CD4-positive, alpha-beta memory T cell (primary cell): ENCODE measurements at regions of chr2 and their contacts with region 1.

Region 1: DNA sequence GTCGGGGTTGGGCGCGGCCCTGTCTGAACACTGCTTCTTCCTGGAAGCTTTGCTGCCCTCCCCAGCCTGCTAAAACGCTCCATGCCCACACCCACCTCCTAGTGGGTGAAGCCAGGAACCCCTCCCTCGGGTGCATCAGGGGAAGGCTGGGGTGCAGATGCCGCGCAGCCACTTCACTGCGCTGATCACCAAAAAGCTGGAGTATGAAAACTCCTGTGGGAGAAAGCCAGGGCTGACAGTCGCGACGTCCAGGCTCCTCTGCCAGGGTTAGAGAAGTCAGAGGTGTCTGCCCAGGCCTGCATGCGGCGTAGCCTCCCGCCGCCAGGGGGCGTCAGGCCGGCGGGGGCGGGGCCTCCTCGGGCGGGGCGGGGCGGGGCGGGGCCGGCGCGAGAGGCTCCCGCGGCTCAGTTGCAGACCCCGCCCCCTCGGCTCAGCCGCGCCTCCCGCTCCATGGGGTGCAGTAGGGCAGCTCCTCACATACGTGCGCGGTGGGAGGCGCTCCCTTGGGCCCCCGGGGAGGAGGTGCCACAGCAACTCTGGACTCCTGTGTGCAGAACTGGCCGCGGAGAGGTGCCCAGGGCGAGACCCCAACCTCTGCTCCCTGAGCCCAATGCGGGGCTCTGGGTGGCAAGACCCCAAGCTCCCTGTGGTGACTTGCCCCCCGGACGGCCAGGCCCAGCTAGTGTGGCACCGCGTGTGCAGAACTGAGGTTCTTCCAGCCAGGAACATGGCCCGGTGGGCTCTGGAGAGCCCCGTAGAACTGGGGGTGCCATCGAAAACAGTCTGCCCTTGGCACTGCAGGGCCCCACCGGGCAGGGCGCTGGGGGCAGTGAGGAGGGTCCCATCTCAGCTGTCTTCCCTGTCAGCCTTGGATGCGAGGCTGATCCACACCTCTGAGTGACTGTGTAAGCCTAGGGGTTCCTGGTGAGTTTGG is 1.8 kb upstream of the RNPEPL1 start:
- DNase-seq: peak; percentile 91 to 96 (median 92)
- H3K4me3 ChIP-seq: peak overlapping the region; percentile 79 to 87
- H3K4me3 Mint-ChIP-seq: peak overlapping the region; percentile 90 to 98 (median 94)
- H3K27ac ChIP-seq: peak overlapping the region; percentile 89
- H3K27ac Mint-ChIP-seq: peak overlapping the region; percentile 98 to 99 (median 99)
- H3K4me1 ChIP-seq: peaks cover 86% of the 10 kb centered on the region
- H3K4me1 Mint-ChIP-seq: peaks cover 46 to 89% (median 69%) of the 10 kb centered on the region in 4 donors
- H3K27me3 ChIP-seq: no peaks in the 10 kb centered on the region
- H3K27me3 Mint-ChIP-seq: no peaks in the 10 kb centered on the region

Region 2: DNA sequence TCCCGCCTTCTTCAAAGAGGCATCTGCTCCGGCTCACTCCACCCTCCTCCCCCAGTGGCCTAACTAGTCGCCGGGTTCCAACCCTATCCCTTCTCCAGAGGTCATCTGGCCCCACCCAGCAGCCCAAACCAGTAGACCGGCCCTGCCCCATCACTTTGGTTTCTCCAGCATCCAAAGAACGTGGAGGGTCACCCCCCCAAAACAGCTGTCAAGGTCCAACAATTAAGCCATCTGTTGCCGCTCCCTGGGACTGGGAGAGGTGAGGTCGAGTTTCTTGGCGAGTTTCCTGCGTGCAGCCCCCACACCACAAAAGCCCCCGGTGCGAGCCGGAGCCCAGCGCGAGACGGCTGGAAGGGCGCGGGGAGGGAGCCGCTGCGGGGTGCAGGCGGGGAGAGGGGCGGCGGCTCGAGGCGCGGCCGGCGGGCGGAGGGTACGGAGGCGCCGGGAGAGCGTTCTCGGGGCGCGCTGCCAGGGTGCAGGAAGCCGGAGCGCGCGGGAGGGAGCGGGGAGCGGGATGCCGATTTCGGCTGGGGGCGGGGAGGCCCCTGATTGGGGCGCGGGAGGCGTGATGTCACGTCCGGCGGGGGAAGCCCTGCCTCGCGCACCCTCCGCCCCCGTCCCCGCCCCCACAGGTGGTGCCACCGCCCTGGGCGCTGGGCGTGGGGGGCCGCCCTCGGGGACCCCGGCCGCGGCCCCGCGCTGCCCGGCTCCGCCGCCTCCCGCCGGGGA is 131.6 kb before region 1 on chr2:
- CTCF ChIA-PET with region 1: no interaction called
- POLR2A ChIA-PET with region 1: interaction called, 5 read pairs
- intact Hi-C with region 1: loop called (anchors 5 kb)
- DNase-seq: peak; percentile 83 to 86 (median 85)
- H3K4me3 ChIP-seq: peak overlapping the region; percentile 47 to 62
- H3K4me3 Mint-ChIP-seq: peak overlapping the region; percentile 84 to 90 (median 86)
- H3K27ac ChIP-seq: no peak overlapping the region
- H3K27ac Mint-ChIP-seq: peak overlapping the region in 5 of 7 donors; percentile 69 to 95 (median 81)
- H3K4me1 ChIP-seq: peaks cover 16% of the 10 kb centered on the region
- H3K4me1 Mint-ChIP-seq: peaks cover 2 to 18% (median 9%) of the 10 kb centered on the region in 4 donors
- H3K27me3 ChIP-seq: peaks cover 8% of the 10 kb centered on the region
- H3K27me3 Mint-ChIP-seq: peaks cover 6 to 11% of the 10 kb centered on the region in 2 donors

Region 3: GRCh38 chr2:240579771-240580614 is 13.5 kb after region 1 on chr2:
- CTCF ChIA-PET with region 1: interaction called, 61 read pairs
- POLR2A ChIA-PET with region 1: interaction called, 461 read pairs
- intact Hi-C with region 1: loop called (anchors 1 kb)
- DNase-seq: peak; percentile 83 to 89 (median 85)
- H3K4me3 ChIP-seq: peak overlapping the region in 1 of 2 donors; percentile 8
- H3K4me3 Mint-ChIP-seq: peak overlapping the region; percentile 5 to 70 (median 47)
- H3K27ac ChIP-seq: peak overlapping the region; percentile 30
- H3K27ac Mint-ChIP-seq: peak overlapping the region; percentile 74 to 93 (median 88)
- H3K4me1 ChIP-seq: peaks cover 34% of the 10 kb centered on the region
- H3K4me1 Mint-ChIP-seq: peaks cover 19 to 50% (median 36%) of the 10 kb centered on the region in 4 donors
- H3K27me3 ChIP-seq: no peaks in the 10 kb centered on the region
- H3K27me3 Mint-ChIP-seq: no peaks in the 10 kb centered on the region

Region 4: DNA sequence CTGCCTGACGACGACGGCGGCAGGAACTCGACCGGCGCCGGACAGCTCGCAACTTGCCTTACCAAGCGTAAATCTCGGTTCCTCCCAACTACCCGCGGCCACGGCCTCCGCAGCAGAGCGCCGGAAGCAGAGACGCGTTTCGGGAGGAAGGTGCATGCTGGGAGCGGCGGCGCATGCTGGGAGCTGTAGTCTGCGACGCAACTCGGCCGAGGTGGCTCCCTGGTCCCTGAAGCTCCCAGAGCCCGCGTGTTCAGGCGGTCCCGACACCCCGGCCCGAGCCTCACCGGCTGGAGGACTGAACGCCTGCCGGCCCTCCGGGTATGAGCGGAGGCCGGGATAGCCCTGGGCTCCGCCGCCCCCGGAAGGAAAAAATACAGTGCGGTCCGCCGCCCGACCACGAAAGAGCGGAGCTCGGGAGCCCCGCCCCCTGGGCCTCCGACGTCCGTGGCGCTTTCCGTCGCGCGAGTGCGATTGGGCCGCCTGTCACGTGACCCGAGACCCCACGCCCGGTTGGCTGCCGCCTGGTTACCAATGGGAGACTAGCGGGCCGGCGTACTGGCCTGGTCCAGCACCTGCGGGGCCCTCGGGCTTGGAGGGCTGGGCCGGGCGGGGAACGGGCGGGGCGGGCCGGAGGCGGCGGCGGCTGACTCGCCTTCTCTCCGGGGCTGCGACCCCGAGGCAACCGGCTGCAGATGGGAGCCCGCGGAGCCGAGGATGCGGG is 19.9 kb after region 1 on chr2 and contains the start of gene CAPN10:
- CTCF ChIA-PET with region 1: interaction called, 61 read pairs
- POLR2A ChIA-PET with region 1: interaction called, 461 read pairs
- intact Hi-C with region 1: loop called (anchors 1 kb)
- DNase-seq: peak; percentile 96 to 98 (median 97)
- H3K4me3 ChIP-seq: peak within 1 kb of the TSS; percentile 63 to 99
- H3K4me3 Mint-ChIP-seq: peak within 1 kb of the TSS; percentile 93 to 98 (median 96)
- H3K27ac ChIP-seq: peak within 1 kb of the TSS; percentile 80
- H3K27ac Mint-ChIP-seq: peak within 1 kb of the TSS; percentile 95 to 98 (median 96)
- H3K4me1 ChIP-seq: peaks cover 38% of the 10 kb centered on the region
- H3K4me1 Mint-ChIP-seq: peaks cover 25 to 63% (median 44%) of the 10 kb centered on the region in 4 donors
- H3K27me3 ChIP-seq: no peaks in the 10 kb centered on the region
- H3K27me3 Mint-ChIP-seq: no peaks in the 10 kb centered on the region
- total RNA-seq, gene CAPN10: 80.6 to 83.0 TPM

Region 5: DNA sequence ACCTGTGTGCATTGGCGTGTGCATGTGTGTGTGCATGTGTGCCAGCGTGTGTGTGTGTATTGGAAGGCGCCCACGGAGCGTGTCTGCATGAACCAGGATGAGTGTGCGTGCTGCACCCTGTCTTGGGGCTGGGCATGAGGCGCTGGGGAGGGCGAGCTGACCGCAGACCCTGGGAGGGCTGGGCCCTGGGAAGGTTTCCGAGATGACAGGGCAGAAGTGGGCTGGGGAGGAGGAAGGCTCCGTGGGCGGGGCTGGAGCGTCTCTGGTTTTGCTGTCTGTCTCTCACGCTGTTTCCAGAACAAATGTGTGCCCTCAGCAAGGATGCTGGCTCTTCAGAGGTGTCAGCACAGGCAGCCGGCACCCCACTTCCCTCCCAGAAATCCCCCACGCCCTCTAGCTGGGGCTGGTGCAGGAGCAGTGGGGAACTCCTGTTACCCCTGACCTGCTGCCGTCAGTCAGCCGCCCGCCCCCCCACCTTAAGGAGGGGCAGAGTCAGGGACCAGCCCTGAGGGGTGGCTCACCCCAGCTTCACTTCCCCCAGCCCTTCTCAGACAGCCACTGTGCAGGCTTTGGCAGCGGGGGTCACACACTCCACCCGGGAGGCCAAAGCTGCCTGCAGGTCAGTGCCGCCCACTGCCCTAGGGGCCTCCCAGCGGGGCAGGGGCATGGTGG is 58.6 kb after region 1 on chr2 and contains the start of gene GPR35:
- CTCF ChIA-PET with region 1: interaction called, 4 read pairs
- POLR2A ChIA-PET with region 1: interaction called, 34 read pairs
- intact Hi-C with region 1: no loop called
- DNase-seq: peak; percentile 74 to 96 (median 80)
- H3K4me3 ChIP-seq: no peak within 1 kb of the TSS
- H3K4me3 Mint-ChIP-seq: peak within 1 kb of the TSS; percentile 61 to 79 (median 68)
- H3K27ac ChIP-seq: peak within 1 kb of the TSS; percentile 81
- H3K27ac Mint-ChIP-seq: peak within 1 kb of the TSS; percentile 90 to 96 (median 95)
- H3K4me1 ChIP-seq: peaks cover 88% of the 10 kb centered on the region
- H3K4me1 Mint-ChIP-seq: peaks cover 34 to 70% (median 44%) of the 10 kb centered on the region in 4 donors
- H3K27me3 ChIP-seq: no peaks in the 10 kb centered on the region
- H3K27me3 Mint-ChIP-seq: no peaks in the 10 kb centered on the region
- total RNA-seq, gene GPR35: 6.3 to 6.8 TPM

Region 6: DNA sequence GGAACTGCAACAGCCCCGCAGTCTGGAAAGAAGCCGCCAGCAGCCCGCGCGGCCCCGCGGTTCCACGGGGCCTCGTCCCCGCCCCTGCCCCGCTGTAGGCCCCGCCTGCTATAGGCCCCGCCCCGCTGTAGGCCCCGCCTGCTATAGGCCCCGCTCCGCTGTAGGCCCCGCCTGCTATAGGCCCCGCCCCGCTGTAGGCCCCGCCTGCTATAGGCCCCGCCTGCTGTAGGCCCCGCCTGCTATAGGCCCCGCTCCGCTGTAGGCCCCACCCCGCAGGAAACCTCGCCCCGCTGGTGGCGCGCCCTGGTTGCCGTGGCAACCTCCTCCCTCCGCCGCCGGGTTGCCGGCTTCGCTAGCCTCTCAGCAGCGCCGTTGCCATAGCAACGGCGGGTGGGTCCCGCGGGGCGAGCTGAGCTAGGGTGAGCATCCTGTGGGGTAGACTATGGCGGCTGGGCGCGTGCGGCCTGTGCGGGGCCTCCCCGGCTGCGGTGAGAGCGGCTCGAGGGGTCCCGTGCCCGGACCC is 265.8 kb after region 1 on chr2:
- CTCF ChIA-PET with region 1: no interaction called
- POLR2A ChIA-PET with region 1: interaction called, 7 read pairs
- intact Hi-C with region 1: loop called (anchors 1 kb)
- DNase-seq: peak; percentile 98 to 99 (median 99)
- H3K4me3 ChIP-seq: peak overlapping the region; percentile 34 to 36
- H3K4me3 Mint-ChIP-seq: peak overlapping the region in 6 of 8 donors; percentile 12 to 81 (median 66)
- H3K27ac ChIP-seq: no peak overlapping the region
- H3K27ac Mint-ChIP-seq: peak overlapping the region in 3 of 7 donors; percentile 55 to 91 (median 82)
- H3K4me1 ChIP-seq: peaks cover 12% of the 10 kb centered on the region
- H3K4me1 Mint-ChIP-seq: peaks cover 0 to 6% (median 3%) of the 10 kb centered on the region in 4 donors
- H3K27me3 ChIP-seq: peaks cover 10% of the 10 kb centered on the region
- H3K27me3 Mint-ChIP-seq: peaks cover 8 to 16% of the 10 kb centered on the region in 2 donors

Region 7: DNA sequence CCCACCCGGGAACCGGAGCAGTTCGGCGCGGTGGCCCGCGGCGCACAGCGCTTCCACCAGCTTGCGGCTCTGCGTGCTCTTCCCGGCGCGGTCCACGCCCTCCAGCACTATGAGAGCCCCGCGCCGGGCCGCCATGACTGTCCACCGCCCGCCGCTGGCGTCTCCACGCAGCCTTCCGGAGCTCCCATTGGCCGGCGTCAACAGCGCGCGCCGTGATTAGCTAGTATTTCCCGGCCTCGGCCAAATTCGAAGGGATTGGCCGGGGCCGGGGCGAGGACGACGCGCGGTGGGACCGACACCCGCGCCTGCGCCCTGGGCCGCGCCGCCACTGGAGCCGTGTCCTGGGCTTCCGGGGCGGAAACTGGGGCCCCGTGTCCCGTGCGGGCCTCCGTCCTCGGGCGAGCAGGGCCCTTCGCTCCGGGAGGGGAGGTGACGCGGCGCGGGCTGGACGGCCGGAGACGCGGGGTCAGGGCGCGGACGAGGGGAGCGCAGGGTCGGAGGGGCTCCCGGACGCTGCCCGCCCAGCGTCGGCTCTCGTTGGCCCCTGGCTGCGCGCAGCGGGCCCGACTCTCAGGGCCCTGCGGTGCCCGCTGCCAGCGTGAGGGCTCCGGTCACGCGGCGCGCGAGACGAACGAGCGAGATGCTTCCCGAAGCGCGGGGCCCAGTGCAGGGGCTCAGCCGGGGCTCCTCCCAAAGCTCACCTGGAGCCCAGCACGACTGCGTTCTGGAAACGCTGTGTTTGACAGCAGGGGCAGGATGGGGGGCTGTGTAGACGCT is 1120.4 kb after region 1 on chr2 and contains the start of gene DTYMK:
- CTCF ChIA-PET with region 1: no interaction called
- POLR2A ChIA-PET with region 1: no interaction called
- intact Hi-C with region 1: loop called (anchors 5 kb)
- DNase-seq: peak; percentile 95 to 98 (median 97)
- H3K4me3 ChIP-seq: peak within 1 kb of the TSS; percentile 57 to 89
- H3K4me3 Mint-ChIP-seq: peak within 1 kb of the TSS; percentile 87 to 96 (median 94)
- H3K27ac ChIP-seq: peak within 1 kb of the TSS; percentile 80
- H3K27ac Mint-ChIP-seq: peak within 1 kb of the TSS; percentile 85 to 93 (median 91)
- H3K4me1 ChIP-seq: peaks cover 32% of the 10 kb centered on the region
- H3K4me1 Mint-ChIP-seq: peaks cover 14 to 40% (median 26%) of the 10 kb centered on the region in 4 donors
- H3K27me3 ChIP-seq: no peaks in the 10 kb centered on the region
- H3K27me3 Mint-ChIP-seq: no peaks in the 10 kb centered on the region
- total RNA-seq, gene DTYMK: 18.8 TPM